WTC11 (cell line): ENCODE measurements at regions of chr7 and their contacts with region 1.

Region 1: DNA sequence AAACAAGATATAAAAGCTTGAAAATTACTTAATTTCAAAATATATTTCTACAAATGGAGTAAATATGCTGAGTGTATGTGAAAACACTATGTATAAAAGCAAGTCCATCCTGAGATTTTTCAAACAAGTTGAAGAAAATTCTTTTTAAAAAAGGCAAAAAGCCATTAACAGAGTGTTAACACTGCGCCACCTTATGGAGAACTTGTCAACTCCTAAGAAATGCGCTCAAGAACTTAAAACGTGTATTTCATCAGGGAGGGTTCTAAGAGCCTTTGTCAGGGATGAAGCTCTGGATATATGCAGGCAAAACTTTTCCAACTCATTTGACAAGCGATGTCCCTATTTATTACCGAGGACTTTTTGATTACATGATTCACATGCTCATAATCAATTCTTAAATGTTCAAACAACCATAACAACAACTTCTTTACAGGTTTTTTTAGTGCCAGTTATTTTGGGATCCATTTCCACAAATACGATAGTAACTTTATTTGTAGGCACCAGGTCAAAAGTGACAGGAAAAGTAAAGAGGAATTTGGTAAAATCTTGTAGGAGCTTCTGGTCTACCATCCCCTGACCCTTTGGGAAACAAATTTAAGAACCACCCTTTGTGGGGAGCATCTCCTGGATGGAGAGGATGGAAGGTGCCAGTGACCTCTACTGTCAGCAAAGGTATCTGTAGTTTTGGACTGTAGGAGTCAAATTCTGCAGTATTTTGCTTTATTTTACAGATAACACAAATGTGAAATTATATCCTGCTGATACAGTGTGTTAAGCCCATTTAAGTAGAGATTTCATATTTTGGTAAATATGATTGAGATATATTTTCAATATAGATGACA is 23.2 kb downstream of the CALCR start:
- DNase-seq: no peak
- ATAC-seq: peak; percentile 91
- H3K4me3 Mint-ChIP-seq: no peak overlapping the region
- H3K27ac Mint-ChIP-seq: no peak overlapping the region
- H3K4me1 Mint-ChIP-seq: peaks cover 4% of the 10 kb centered on the region; the same call in 1 of the 2 replicates
- H3K27me3 Mint-ChIP-seq: no peaks in the 10 kb centered on the region
- CTCF ChIP-seq: peak; percentile 32

Region 2: GRCh38 chr7:93231799-93232672 is 319.2 kb before region 1 on chr7 and contains the start of gene VPS50:
- CTCF ChIA-PET with region 1: interaction called, 13 read pairs
- POLR2A ChIA-PET with region 1: no interaction called
- DNase-seq: peak; percentile 91
- ATAC-seq: peak; percentile 97
- H3K4me3 Mint-ChIP-seq: peak within 1 kb of the TSS; percentile 99
- H3K27ac Mint-ChIP-seq: peak within 1 kb of the TSS; percentile 99
- H3K4me1 Mint-ChIP-seq: no peaks in the 10 kb centered on the region
- H3K27me3 Mint-ChIP-seq: peaks cover 4% of the 10 kb centered on the region
- CTCF ChIP-seq: no peak
- total RNA-seq, gene VPS50: 9.2 to 11.2 TPM (median 10.4 TPM) in 3 replicates

Region 3: DNA sequence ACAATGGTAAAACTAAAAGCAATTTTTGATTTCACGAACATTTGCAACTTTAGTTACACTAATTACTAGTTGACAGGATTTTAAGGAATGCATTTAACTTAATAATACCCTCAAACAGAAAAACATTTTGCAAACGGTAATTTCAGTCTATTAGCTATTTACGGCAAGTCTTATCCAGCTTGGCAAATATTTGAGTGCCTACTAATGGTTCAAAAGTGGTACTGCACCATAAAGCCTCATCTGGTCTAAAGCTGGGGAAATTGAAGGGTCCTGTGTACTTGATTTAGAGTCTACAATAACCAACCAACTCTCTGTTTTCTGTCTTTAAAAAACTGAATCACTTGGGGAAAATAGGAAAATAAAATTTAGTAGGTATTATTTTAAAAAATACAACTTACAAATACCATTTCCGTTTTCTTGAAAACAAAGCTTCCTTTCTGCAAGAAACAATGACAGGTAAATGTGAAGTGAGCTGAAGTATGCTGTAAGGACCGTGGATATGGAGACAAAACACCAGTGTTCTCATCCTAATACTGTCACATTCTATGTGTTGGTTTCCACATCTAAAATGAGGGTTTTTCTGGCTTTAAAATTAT is 176.8 kb before region 1 on chr7:
- CTCF ChIA-PET with region 1: interaction called, 11 read pairs
- POLR2A ChIA-PET with region 1: no interaction called
- DNase-seq: no peak
- ATAC-seq: peak; percentile 94
- H3K4me3 Mint-ChIP-seq: no peak overlapping the region
- H3K27ac Mint-ChIP-seq: no peak overlapping the region
- H3K4me1 Mint-ChIP-seq: peaks cover 9% of the 10 kb centered on the region
- H3K27me3 Mint-ChIP-seq: no peaks in the 10 kb centered on the region; the same call in 1 of the 2 replicates
- CTCF ChIP-seq: peak; percentile 49

Region 4: DNA sequence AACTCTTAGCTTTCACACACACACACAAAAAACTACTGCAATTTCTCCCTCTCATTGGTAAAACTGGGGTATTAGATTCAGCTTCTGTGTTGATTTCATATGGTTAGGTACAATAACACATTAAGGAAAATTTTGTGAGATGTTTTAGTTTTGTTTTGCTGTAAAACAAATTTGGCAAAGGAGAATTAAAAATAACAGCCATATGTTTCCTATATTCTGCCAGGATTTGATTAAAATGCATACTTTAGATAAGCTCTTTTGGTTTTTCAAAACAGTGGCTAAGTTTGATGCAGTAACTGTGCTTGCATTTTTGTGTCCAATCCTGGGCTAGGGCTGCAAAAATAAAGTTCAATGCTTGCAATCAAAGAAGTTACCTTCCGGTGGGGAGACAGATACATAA is 103.1 kb before region 1 on chr7:
- CTCF ChIA-PET with region 1: interaction called, 31 read pairs
- POLR2A ChIA-PET with region 1: no interaction called
- DNase-seq: no peak
- ATAC-seq: no peak
- H3K4me3 Mint-ChIP-seq: no peak overlapping the region
- H3K27ac Mint-ChIP-seq: no peak overlapping the region
- H3K4me1 Mint-ChIP-seq: peaks cover 6% of the 10 kb centered on the region
- H3K27me3 Mint-ChIP-seq: no peaks in the 10 kb centered on the region
- CTCF ChIP-seq: no peak

Region 5: GRCh38 chr7:93562936-93563335 is 11.7 kb after region 1 on chr7:
- CTCF ChIA-PET with region 1: interaction called, 13 read pairs
- POLR2A ChIA-PET with region 1: no interaction called
- DNase-seq: no peak
- ATAC-seq: no peak
- H3K4me3 Mint-ChIP-seq: no peak overlapping the region
- H3K27ac Mint-ChIP-seq: no peak overlapping the region
- H3K4me1 Mint-ChIP-seq: peaks cover 18% of the 10 kb centered on the region
- H3K27me3 Mint-ChIP-seq: no peaks in the 10 kb centered on the region
- CTCF ChIP-seq: no peak